ENCODE measurements at regions of chr17 and their contacts with region 1.

Region 1: GRCh38 chr17:27332485-27333409 is 38.8 kb downstream of the WSB1 start:
- DNase-seq: peak; percentile 85 to 98 (median 95)
- H3K4me3 ChIP-seq: peak overlapping the region; percentile 38 to 88 (median 65)
- H3K27ac ChIP-seq: peak overlapping the region; percentile 84 to 99 (median 96)
- H3K27me3 ChIP-seq: no peaks in the 10 kb centered on the region
- CTCF ChIP-seq: peak; percentile 51 to 99 (median 93)

Region 2: DNA sequence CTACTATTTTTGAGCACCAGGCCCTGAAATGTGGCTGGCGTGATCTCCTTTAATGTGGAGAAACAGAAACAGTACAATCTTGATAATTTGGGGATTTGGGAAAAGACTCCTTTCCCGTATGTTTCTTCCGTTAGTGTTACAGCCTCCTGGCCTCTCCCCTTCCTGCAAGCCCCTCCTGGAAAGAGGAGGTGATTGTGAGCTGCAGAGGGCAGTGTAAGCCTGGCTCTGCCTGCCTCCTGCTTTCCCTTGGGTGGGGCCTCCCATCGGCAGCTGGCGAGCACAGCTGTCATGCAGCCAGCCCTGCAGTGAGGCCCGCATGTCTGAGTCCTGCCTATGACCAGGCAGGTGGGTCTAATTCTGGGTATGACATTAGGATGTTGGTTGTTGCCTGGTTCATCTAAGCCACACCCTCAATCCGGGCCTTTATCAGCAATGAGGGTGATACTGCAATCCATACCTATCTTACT is 87.5 kb before region 1 on chr17:
- intact Hi-C with region 1: loop called (anchors 1 to 2 kb)
- DNase-seq: peak; percentile 18 to 89 (median 82)
- H3K4me3 ChIP-seq: peak overlapping the region in 21 of 59 donors; percentile 1 to 30 (median 14)
- H3K27ac ChIP-seq: peak overlapping the region; percentile 2 to 92 (median 84)
- H3K27me3 ChIP-seq: no peaks in the 10 kb centered on the region
- CTCF ChIP-seq: peak; percentile 41 to 94 (median 78)

Region 3: DNA sequence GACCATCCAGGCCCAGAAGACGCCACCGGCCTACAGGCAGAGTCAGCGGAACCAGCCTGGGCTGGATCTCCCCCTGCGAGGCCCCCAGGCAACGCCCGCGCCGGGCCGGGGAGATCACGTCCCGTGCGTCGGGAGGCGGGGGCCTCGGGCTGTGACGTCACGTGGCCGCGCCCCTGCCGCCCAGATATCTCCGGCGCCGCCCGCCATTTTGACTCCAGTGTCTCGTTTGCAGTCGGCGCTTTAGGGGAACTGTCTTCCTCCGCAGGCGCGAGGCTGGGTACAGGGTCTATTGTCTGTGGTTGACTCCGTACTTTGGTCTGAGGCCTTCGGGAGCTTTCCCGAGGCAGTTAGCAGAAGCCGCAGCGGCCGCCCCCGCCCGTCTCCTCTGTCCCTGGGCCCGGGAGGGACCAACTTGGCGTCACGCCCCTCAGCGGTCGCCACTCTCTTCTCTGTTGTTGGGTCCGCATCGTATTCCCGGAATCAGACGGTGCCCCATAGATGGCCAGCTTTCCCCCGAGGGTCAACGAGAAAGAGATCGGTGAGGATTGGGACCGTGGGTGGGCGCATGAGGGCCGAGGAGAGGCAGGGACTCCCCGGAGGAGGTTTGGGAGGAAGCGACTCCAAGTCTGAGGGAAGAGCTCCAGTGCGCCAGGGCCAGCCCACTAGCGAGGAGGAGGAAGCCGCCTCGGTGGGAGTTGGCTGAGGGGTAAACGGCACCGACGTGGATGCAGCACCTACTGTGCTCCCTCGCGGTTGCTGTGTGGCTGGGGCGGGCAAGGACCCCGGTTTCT is 38.7 kb before region 1 on chr17 and contains the start of gene WSB1:
- intact Hi-C with region 1: loop called (anchors 1 kb)
- DNase-seq: peak; percentile 90 to 96 (median 94)
- H3K4me3 ChIP-seq: peak within 1 kb of the TSS; percentile 63 to 99 (median 92)
- H3K27ac ChIP-seq: peak within 1 kb of the TSS; percentile 76 to 100 (median 99)
- H3K27me3 ChIP-seq: no peaks in the 10 kb centered on the region
- CTCF ChIP-seq: peak in 41 of 56 donors; percentile 2 to 57 (median 30)
- total RNA-seq, gene WSB1: 91.4 to 483 (median 217) TPM

Region 4: DNA sequence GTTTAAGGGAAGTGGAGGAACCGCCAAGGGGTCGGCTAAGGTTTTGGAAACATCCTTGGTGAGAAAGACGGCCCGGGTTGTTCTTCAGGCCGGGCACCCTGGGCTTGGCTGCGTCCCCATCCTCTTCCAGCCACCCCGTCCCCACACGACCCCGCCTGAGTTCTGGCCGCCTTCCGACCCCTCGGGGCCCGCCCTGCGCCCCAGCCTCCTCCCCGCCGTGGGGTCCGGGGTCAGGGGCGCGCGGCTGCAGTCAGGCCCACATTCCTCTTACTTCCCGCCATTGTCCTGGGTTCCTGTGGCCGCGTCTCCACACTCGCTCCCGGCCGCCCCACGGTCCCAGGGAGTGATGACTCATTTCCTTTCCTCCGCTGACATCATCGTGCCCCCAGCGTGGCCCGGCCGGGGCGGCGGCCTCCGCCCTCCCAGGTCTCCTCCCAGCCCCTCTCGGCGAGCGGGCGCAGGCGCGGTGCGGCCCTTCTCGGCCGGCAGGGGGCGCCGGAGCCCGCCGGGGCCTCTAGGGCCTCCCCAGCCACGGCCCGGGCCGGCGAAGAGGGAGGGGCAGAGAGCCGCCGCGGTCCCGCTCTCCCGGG is 20.8 kb after region 1 on chr17:
- intact Hi-C with region 1: loop called in 1 of 2 experiments (anchors 1 kb)
- DNase-seq: peak; percentile 62 to 90 (median 78)
- H3K4me3 ChIP-seq: peak overlapping the region; percentile 51 to 89 (median 73)
- H3K27ac ChIP-seq: peak overlapping the region; percentile 37 to 98 (median 91)
- H3K27me3 ChIP-seq: no peaks in the 10 kb centered on the region
- CTCF ChIP-seq: peak; percentile 38 to 99 (median 87)

Region 5: DNA sequence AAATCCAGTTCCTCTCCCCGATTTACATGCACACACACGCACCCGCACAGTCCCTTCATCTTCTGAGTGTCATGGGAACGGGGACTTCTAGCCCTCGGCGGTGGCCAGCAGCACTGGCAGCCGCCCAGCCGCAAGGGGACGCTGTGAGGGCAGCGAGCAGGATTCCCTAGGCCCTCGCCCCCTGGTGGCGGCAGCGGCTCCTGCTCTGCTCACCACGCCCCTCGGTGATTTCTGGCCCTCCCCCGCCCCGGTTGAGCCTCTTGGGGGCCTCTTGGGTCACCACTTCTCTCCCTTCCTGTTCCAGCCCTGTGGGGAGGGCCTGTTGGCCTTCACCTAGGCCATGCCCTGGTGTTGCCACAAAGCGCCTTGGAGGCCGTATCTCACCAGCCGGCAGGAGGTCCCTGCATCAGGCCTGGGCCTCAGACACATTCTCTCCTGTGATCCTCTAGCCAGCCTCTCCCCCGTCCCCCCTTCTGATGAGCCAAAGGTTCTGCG is 48.3 kb after region 1 on chr17:
- intact Hi-C with region 1: loop called in 1 of 2 experiments (anchors 5 kb)
- DNase-seq: peak in 8 of 10 donors; percentile 29 to 67 (median 49)
- H3K4me3 ChIP-seq: peak overlapping the region in 39 of 59 donors; percentile 10 to 64 (median 51)
- H3K27ac ChIP-seq: peak overlapping the region in 3 of 59 donors; percentile 55 to 79 (median 75)
- H3K27me3 ChIP-seq: no peaks in the 10 kb centered on the region
- CTCF ChIP-seq: peak in 55 of 56 donors; percentile 35 to 93 (median 75)